ENCODE measurements at regions of chr12 and their contacts with region 1.

Region 1: GRCh38 chr12:54040148-54040494 is 7.3 kb downstream of the HOXC5 start:
- ATAC-seq: peak; percentile 14 to 65 (median 39)
- H3K4me3 ChIP-seq: peak overlapping the region in 4 of 5 donors; percentile 31 to 49 (median 34)
- H3K27ac ChIP-seq: no peak overlapping the region
- H3K4me1 ChIP-seq: peaks cover 72 to 94% of the 10 kb centered on the region in 2 donors

Region 2: GRCh38 chr12:53508534-53509199 is 531.5 kb before region 1 on chr12:
- in situ Hi-C with region 1: no loop called
- ATAC-seq: peak; percentile 78 to 97 (median 93)
- H3K4me3 ChIP-seq: no peak overlapping the region
- H3K27ac ChIP-seq: no peak overlapping the region
- H3K4me1 ChIP-seq: no peaks in the 10 kb centered on the region

Region 3: DNA sequence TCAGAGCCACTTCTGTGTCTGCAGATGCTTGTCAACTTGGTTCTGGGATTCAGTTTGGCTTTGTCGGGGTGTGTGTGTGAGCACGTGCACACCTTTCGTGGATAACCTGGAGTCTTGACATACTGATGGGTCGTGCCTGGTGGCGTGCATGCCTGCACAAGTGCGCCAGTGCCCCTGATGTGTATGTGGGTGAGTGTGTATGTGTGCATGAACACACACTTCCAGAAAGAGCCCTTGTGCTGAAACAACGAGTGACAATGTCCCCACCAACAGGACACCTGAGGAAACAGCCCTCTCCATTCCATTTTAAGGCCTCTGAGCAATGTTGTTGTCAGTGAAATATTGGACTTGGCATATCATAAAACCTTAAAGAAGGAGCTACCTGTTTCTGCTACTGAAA is 94.7 kb after region 1 on chr12:
- in situ Hi-C with region 1: loop called in 1 of 9 experiments (anchors 10 kb)
- ATAC-seq: peak in 5 of 8 experiments; percentile 28 to 57 (median 44)
- H3K4me3 ChIP-seq: no peak overlapping the region
- H3K27ac ChIP-seq: peak overlapping the region; percentile 84 to 86
- H3K4me1 ChIP-seq: peaks cover 61 to 69% of the 10 kb centered on the region in 2 donors

Region 4: DNA sequence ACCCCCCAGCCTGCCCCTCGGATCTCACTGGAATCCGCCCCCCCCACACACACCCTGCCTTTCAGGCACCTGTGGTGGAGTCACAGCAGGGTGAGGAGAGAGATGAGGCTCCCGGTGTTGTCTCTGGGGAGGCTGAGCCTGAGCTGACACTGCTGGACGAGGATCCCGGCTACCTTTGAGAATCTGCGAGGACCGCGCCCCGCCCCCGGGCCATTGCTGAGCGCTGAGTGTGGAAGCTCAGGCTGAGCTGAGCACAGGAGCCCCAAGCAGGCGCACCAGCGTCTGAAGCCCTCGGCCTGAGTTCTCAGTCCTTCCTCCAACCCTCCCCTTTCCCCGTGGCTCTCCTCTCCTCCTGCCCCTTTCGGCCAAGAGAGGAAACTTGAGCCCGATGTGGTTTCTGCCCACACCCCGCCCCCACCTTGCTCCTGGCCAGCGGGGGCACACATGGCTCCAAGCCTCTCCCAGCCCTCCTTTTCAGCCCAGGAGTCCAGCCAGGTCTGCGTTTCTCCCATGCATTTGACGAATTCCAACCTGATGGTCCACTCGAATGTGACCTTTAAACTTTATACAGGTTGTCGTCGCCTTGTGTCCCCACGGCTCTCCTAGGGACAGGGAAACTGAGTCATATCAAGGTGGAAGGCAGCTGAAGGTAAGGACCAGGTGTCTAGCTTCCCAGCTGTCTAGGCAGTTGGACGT is 260.8 kb after region 1 on chr12 and contains the start of gene NFE2:
- in situ Hi-C with region 1: no loop called
- ATAC-seq: peak; percentile 82 to 96 (median 94)
- H3K4me3 ChIP-seq: no peak within 1 kb of the TSS
- H3K27ac ChIP-seq: no peak within 1 kb of the TSS
- H3K4me1 ChIP-seq: peaks cover 2 to 12% of the 10 kb centered on the region in 2 donors
- total RNA-seq, gene NFE2: 0.08 to 17.8 (median 1.6) TPM in 7 of 8 experiments, not detected in the other